Activated CD8-positive, alpha-beta T cell treated with anti-CD3 and anti-CD28 coated beads, Interleukin-2, amount 10 ng/mL, durations not matched to agents 7 days and 5 days (primary cell): ENCODE measurements at regions of chr17 and their contacts with region 1.

Region 1: DNA sequence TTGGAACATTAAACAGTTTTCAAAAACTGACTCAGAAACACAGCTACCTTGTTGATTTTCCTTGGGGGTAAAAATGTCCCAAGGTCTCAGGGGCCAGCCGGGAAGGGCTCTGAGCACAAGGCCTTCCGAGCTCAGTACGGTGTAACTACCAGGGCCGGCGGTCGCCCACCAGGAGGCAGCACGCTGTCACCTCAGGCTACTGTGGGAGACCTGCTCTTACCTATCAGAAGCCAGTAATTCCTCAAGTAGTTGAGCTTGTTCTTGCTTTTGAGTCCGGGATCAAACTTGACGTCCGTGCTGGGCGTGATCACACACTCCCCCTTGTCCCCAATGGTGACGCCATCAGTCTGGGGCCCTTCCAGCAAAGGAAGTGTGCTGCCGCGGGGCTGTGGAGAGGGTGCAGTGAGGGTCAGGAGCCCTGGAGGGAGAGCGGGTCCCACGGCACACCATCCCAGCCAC is 43.4 kb upstream of the ICAM2 start:
- DNase-seq: peak; percentile 71
- ATAC-seq: peak; percentile 64
- H3K4me3 Mint-ChIP-seq: no peak overlapping the region
- H3K27ac Mint-ChIP-seq: peak overlapping the region; percentile 1
- H3K4me1 Mint-ChIP-seq: peaks cover 71% of the 10 kb centered on the region
- H3K27me3 Mint-ChIP-seq: no peaks in the 10 kb centered on the region

Region 2: DNA sequence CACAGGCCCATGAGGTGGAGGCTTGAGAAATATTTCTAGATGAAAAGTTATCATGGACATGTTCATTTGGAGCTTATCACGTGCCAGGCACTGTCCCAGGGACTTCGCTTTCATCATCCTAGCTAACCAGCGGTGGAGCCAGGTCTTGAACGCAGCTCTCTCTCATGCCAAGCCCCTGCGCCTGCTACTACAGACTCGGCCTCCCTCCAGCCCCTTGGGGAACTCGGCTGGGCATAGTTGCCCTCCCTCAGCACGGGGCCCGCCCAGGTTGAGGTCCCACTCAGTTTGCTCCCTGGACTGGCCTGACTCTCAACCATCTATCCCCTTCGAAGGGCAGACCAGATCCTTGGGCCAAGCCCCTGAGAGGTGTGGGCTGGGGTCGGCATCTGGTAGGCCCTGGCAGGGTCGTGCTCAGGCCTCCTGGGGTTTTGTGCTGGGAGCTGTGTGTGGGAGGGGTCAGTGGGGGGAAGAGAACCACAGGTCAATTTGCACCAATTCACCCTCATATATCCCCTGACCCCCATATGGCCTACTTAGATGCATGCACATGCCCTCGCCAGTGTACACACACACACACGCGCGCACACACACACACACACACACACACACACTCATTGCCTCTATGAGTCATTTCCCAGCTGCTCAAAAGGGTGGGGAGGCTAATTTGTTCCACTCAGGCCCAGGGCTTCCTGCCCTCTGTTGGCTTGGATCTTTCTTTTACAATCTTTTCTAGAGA is 79.0 kb before region 1 on chr17:
- CTCF ChIA-PET with region 1: no interaction called
- POLR2A ChIA-PET with region 1: no interaction called
- DNase-seq: peak; percentile 84
- ATAC-seq: peak; percentile 84
- H3K4me3 Mint-ChIP-seq: no peak overlapping the region
- H3K27ac Mint-ChIP-seq: peak overlapping the region; percentile 66
- H3K4me1 Mint-ChIP-seq: peaks cover 23% of the 10 kb centered on the region
- H3K27me3 Mint-ChIP-seq: peaks cover 2% of the 10 kb centered on the region

Region 3: GRCh38 chr17:64041912-64042311 is 21.9 kb before region 1 on chr17:
- CTCF ChIA-PET with region 1: interaction called, 10 read pairs
- POLR2A ChIA-PET with region 1: no interaction called
- DNase-seq: no peak
- ATAC-seq: no peak
- H3K4me3 Mint-ChIP-seq: no peak overlapping the region
- H3K27ac Mint-ChIP-seq: no peak overlapping the region
- H3K4me1 Mint-ChIP-seq: peaks cover 11% of the 10 kb centered on the region
- H3K27me3 Mint-ChIP-seq: no peaks in the 10 kb centered on the region

Region 4: GRCh38 chr17:64051153-64051552 is 12.6 kb before region 1 on chr17:
- CTCF ChIA-PET with region 1: interaction called, 10 read pairs
- POLR2A ChIA-PET with region 1: interaction called, 3 read pairs
- DNase-seq: peak; percentile 48
- ATAC-seq: peak; percentile 96
- H3K4me3 Mint-ChIP-seq: peak overlapping the region; percentile 18
- H3K27ac Mint-ChIP-seq: peak overlapping the region; percentile 82
- H3K4me1 Mint-ChIP-seq: peaks cover 37% of the 10 kb centered on the region
- H3K27me3 Mint-ChIP-seq: no peaks in the 10 kb centered on the region

Region 5: DNA sequence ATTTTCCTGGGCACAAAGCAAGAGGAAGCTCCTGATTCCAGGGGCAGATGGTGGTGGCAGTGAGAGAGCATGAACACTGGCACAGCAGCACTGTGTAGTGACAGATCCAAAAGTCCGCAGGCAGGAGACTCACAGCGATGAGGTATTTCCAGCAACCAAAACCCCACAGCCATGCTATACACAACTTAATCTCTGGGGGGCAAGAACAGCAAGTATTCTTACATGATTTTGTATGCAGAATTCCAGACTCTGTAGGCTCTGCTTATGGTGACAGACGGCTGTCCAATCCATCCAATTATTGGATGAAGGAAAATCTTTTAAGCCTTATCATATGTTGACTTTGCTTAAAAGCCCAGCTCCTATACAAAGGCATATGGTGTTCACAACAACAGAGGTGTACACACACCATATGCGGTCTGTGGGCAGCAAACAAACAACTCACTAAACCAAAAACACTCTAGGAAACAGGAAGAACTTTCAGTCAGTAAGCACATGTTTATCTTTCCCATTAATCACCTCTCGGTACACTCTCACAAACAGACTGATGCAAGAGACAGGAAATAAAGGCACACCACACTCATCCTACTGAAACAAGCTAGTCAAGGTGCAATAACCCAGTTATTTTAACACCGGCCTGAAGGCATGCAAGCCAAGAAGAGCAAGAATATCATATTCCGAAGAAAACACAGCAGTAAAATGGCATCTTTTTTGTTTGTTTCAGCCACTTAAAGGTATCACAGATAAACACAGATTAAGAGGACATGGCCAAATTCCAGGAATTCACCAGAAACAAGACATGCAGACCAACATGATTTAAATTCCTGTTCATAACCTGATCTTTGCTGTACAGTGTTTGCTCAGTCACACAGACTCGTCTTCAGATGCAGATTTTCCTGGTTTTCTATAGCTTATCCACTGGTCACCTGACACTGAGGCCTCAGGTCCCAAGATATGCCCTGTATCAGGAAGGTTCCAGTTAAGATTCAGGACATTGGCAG is 18.3 kb after region 1 on chr17:
- CTCF ChIA-PET with region 1: interaction called, 10 read pairs
- POLR2A ChIA-PET with region 1: interaction called, 7 read pairs
- DNase-seq: peak; percentile 68
- ATAC-seq: peak; percentile 89
- H3K4me3 Mint-ChIP-seq: peak overlapping the region; percentile 51
- H3K27ac Mint-ChIP-seq: peak overlapping the region; percentile 87
- H3K4me1 Mint-ChIP-seq: peaks cover 16% of the 10 kb centered on the region
- H3K27me3 Mint-ChIP-seq: no peaks in the 10 kb centered on the region

Region 6: GRCh38 chr17:64117981-64118979 is 54.5 kb after region 1 on chr17:
- CTCF ChIA-PET with region 1: interaction called, 12 read pairs
- POLR2A ChIA-PET with region 1: interaction called, 3 read pairs
- DNase-seq: no peak
- ATAC-seq: no peak
- H3K4me3 Mint-ChIP-seq: no peak overlapping the region
- H3K27ac Mint-ChIP-seq: no peak overlapping the region
- H3K4me1 Mint-ChIP-seq: peaks cover 48% of the 10 kb centered on the region
- H3K27me3 Mint-ChIP-seq: no peaks in the 10 kb centered on the region

Region 7: GRCh38 chr17:64236853-64237277 is 173.1 kb after region 1 on chr17:
- CTCF ChIA-PET with region 1: no interaction called
- POLR2A ChIA-PET with region 1: no interaction called
- DNase-seq: no peak
- ATAC-seq: no peak
- H3K4me3 Mint-ChIP-seq: no peak overlapping the region
- H3K27ac Mint-ChIP-seq: no peak overlapping the region
- H3K4me1 Mint-ChIP-seq: peaks cover 10% of the 10 kb centered on the region
- H3K27me3 Mint-ChIP-seq: no peaks in the 10 kb centered on the region